ENCODE measurements at regions of chr4 and their contacts with region 1.

Region 1: GRCh38 chr4:16001484-16001858 is 38.5 kb upstream of the FGFBP2 start:
- DNase-seq: peak; percentile 75
- H3K4me3 Mint-ChIP-seq: no peak overlapping the region
- H3K27ac Mint-ChIP-seq: no peak overlapping the region
- H3K4me1 Mint-ChIP-seq: no peaks in the 10 kb centered on the region
- H3K27me3 Mint-ChIP-seq: no peaks in the 10 kb centered on the region
- CTCF ChIP-seq: peak; percentile 94

Region 2: GRCh38 chr4:15729910-15730533 is 271.4 kb before region 1 on chr4:
- CTCF ChIA-PET with region 1: no interaction called
- POLR2A ChIA-PET with region 1: no interaction called
- intact Hi-C with region 1: loop called (anchors 2 kb)
- DNase-seq: peak; percentile 67
- H3K4me3 Mint-ChIP-seq: no peak overlapping the region
- H3K27ac Mint-ChIP-seq: no peak overlapping the region
- H3K4me1 Mint-ChIP-seq: no peaks in the 10 kb centered on the region
- H3K27me3 Mint-ChIP-seq: peaks cover 17% of the 10 kb centered on the region
- CTCF ChIP-seq: peak; percentile 65

Region 3: GRCh38 chr4:15920723-15921591 is 80.5 kb before region 1 on chr4:
- CTCF ChIA-PET with region 1: no interaction called
- POLR2A ChIA-PET with region 1: no interaction called
- intact Hi-C with region 1: no loop called
- DNase-seq: peak; percentile 97
- H3K4me3 Mint-ChIP-seq: no peak overlapping the region
- H3K27ac Mint-ChIP-seq: peak overlapping the region; percentile 36
- H3K4me1 Mint-ChIP-seq: peaks cover 40% of the 10 kb centered on the region
- H3K27me3 Mint-ChIP-seq: no peaks in the 10 kb centered on the region
- CTCF ChIP-seq: no peak

Region 4: DNA sequence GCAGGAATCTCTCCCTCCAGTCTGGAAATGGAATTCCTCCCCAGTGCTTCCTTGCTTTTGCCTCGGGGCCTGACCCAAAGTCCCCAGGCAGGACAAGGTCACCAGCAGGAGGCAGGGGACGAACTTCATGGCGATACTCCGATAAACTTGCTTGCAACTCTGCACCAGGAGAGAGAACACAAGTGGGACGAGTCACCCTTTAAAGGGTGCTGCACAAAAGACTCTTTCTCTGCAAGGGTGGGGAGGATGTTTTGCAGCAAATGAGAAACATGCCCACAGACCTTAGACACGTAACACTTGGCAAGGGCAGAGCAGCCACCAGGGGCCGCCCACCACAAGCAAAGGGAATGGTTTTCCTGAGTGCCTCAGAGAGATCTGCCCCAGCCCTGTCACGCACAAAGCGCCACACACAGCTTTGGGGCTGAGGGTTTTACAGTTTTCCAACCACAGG is 38.4 kb before region 1 on chr4 and contains the start of gene FGFBP2:
- CTCF ChIA-PET with region 1: interaction called, 9 read pairs
- POLR2A ChIA-PET with region 1: no interaction called
- intact Hi-C with region 1: loop called (anchors 1 kb)
- DNase-seq: peak; percentile 44
- H3K4me3 Mint-ChIP-seq: no peak within 1 kb of the TSS
- H3K27ac Mint-ChIP-seq: no peak within 1 kb of the TSS
- H3K4me1 Mint-ChIP-seq: no peaks in the 10 kb centered on the region
- H3K27me3 Mint-ChIP-seq: peaks cover 17% of the 10 kb centered on the region
- CTCF ChIP-seq: peak; percentile 18
- total RNA-seq, gene FGFBP2: not detected in 2 replicates

Region 5: GRCh38 chr4:15976456-15977447 is 24.7 kb before region 1 on chr4:
- CTCF ChIA-PET with region 1: interaction called, 14 read pairs
- POLR2A ChIA-PET with region 1: interaction called, 3 read pairs
- intact Hi-C with region 1: no loop called
- DNase-seq: no peak
- H3K4me3 Mint-ChIP-seq: no peak overlapping the region
- H3K27ac Mint-ChIP-seq: no peak overlapping the region
- H3K4me1 Mint-ChIP-seq: no peaks in the 10 kb centered on the region
- H3K27me3 Mint-ChIP-seq: peaks cover 28% of the 10 kb centered on the region
- CTCF ChIP-seq: no peak

Region 6: GRCh38 chr4:16187455-16187854 is 186.0 kb after region 1 on chr4:
- CTCF ChIA-PET with region 1: no interaction called
- POLR2A ChIA-PET with region 1: no interaction called
- intact Hi-C with region 1: no loop called
- DNase-seq: no peak
- H3K4me3 Mint-ChIP-seq: no peak overlapping the region
- H3K27ac Mint-ChIP-seq: no peak overlapping the region
- H3K4me1 Mint-ChIP-seq: no peaks in the 10 kb centered on the region
- H3K27me3 Mint-ChIP-seq: no peaks in the 10 kb centered on the region
- CTCF ChIP-seq: no peak

Measured in MCF 10A (cell line).